ENCODE measurements at regions of chr10 and their contacts with region 1.

Region 1: GRCh38 chr10:100664316-100665149 is 80.8 kb upstream of the PAX2 start:
- DNase-seq: no peak
- ATAC-seq: no peak
- H3K4me3 ChIP-seq: no peak overlapping the region
- H3K27ac ChIP-seq: no peak overlapping the region
- H3K4me1 ChIP-seq: peaks cover 0 to 2% (median 0%) of the 10 kb centered on the region in 9 donors
- H3K27me3 ChIP-seq: peaks cover 3 to 98% (median 85%) of the 10 kb centered on the region in 7 donors
- CTCF ChIP-seq: no peak

Region 2: GRCh38 chr10:100743626-100744135 is 79.1 kb after region 1 on chr10:
- intact Hi-C with region 1: loop called in 1 of 10 experiments (anchors 5 kb)
- DNase-seq: peak in 1 of 2 donors; percentile 24
- ATAC-seq: peak in 6 of 8 donors; percentile 27 to 75 (median 64)
- H3K4me3 ChIP-seq: peak overlapping the region in 1 of 10 donors; percentile 44
- H3K27ac ChIP-seq: no peak overlapping the region
- H3K4me1 ChIP-seq: peaks cover 18 to 66% (median 52%) of the 10 kb centered on the region in 9 donors
- H3K27me3 ChIP-seq: peaks cover 81 to 100% (median 100%) of the 10 kb centered on the region in 7 donors
- CTCF ChIP-seq: peak in 8 of 9 donors; percentile 34 to 69 (median 56)

Measured in heart right ventricle (tissue), 16 donors.